ENCODE measurements at regions of chr5 and their contacts with region 1.

Region 1: DNA sequence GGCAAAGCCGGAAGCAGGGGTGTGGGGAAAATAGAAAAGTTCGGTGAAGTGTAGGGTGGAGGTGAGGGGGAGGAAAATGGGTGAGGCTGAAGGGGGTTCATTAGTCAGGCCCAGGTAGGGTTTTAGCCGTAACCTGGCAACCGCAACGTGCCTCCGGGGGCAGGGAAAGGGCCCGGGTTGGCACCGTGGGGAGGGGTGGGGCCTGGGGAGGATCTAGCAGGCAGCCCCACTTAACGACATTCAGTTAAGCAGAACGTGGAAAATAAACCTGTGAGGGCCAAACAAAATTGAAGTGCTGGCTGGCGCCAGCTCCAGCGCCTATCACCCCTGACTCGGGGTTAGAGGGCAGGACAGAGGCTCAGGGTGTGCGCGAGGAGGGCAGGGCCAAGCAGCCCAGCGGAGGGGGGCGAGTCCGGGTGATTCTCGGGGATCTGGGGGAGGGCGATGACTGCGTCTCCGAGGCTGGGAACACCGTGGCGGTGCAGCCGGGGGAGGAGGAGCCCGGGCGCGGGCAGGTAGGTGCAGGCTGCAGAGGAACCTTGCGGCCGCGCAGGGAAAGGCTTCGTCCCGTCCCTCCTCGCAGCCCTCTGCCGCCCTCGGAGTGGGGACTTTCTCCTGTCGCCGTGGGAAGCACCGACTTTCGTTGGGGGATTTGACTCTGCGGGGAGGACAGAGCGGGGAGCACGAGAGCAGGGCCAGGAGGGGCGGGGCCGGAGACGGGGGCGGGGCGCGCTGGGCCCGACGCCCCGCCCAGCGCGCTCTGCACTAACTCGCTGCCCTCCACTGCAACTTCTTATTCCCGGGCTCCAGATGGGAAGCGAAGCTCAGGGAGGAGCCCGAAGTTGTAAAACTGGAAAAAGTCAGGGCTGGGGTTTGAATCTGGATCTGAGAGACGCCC is 5.1 kb downstream of the RGS14 start:
- DNase-seq: peak; percentile 89
- H3K4me3 Mint-ChIP-seq: peak overlapping the region; percentile 75
- H3K27ac Mint-ChIP-seq: peak overlapping the region; percentile 84
- H3K4me1 Mint-ChIP-seq: peaks cover 74% of the 10 kb centered on the region
- H3K27me3 Mint-ChIP-seq: no peaks in the 10 kb centered on the region

Region 2: GRCh38 chr5:177271113-177271512 is 91.7 kb before region 1 on chr5:
- CTCF ChIA-PET with region 1: no interaction called
- intact Hi-C with region 1: no loop called
- DNase-seq: no peak
- H3K4me3 Mint-ChIP-seq: no peak overlapping the region
- H3K27ac Mint-ChIP-seq: no peak overlapping the region
- H3K4me1 Mint-ChIP-seq: no peaks in the 10 kb centered on the region
- H3K27me3 Mint-ChIP-seq: no peaks in the 10 kb centered on the region

Region 3: GRCh38 chr5:177311723-177312648 is 50.9 kb before region 1 on chr5 and contains the start of gene MXD3:
- CTCF ChIA-PET with region 1: interaction called, 5 read pairs
- intact Hi-C with region 1: loop called (anchors 2 kb)
- DNase-seq: peak; percentile 99
- H3K4me3 Mint-ChIP-seq: peak within 1 kb of the TSS; percentile 97
- H3K27ac Mint-ChIP-seq: peak within 1 kb of the TSS; percentile 82
- H3K4me1 Mint-ChIP-seq: peaks cover 20% of the 10 kb centered on the region
- H3K27me3 Mint-ChIP-seq: peaks cover 3% of the 10 kb centered on the region
- total RNA-seq, gene MXD3: 45.0 to 51.7 TPM

Region 4: DNA sequence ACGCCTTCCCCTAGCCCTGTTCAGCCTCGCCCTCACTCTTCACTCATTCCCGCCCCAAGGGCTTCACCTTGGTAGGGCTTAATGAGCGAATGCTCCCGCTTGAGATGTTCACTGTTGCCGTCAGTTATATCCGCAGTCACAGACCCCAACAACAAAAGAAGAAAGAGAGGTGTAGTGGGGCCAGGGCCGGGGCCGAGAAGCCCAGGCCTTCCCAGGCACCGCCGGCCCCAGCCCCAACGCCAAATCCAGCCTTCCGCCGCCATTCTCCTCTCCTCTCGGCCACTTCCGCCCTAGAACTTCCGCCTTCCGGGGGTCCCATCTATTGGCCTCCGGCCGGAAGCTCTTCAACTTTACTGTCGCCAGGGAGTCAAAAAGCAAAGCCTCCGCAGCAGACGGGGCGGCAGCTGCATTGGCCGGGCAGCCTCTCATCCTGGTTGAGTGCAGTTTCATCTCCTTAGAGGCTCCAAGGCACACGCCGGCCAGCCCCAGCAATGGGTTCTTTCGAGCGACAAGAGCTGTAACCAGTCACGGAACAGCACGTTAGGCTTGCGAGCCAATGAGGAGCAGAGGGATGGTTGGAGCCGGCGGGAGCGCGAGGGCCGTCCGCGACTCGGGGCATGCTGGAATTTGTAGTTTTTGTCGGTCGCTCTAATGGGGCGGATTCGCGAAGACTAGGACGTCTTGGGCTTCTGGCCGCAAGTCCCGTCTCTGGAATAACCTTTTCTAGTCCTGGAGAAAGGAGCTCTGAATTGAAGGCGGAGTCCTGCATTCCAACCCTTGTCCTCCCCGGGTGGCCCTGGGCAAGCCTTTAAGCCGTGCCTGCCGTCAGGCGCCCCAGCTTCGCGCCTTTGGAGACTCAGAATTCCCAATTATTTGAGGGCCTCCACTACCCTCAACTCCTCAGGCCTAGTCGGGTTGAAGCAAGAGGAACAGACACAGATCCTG is 11.2 kb before region 1 on chr5 and contains the start of gene LMAN2:
- CTCF ChIA-PET with region 1: interaction called, 8 read pairs
- intact Hi-C with region 1: loop called (anchors 1 kb)
- DNase-seq: peak; percentile 96
- H3K4me3 Mint-ChIP-seq: peak within 1 kb of the TSS; percentile 95
- H3K27ac Mint-ChIP-seq: peak within 1 kb of the TSS; percentile 100
- H3K4me1 Mint-ChIP-seq: peaks cover 43% of the 10 kb centered on the region
- H3K27me3 Mint-ChIP-seq: no peaks in the 10 kb centered on the region
- total RNA-seq, gene LMAN2: 82.2 to 83.9 TPM

Region 5: DNA sequence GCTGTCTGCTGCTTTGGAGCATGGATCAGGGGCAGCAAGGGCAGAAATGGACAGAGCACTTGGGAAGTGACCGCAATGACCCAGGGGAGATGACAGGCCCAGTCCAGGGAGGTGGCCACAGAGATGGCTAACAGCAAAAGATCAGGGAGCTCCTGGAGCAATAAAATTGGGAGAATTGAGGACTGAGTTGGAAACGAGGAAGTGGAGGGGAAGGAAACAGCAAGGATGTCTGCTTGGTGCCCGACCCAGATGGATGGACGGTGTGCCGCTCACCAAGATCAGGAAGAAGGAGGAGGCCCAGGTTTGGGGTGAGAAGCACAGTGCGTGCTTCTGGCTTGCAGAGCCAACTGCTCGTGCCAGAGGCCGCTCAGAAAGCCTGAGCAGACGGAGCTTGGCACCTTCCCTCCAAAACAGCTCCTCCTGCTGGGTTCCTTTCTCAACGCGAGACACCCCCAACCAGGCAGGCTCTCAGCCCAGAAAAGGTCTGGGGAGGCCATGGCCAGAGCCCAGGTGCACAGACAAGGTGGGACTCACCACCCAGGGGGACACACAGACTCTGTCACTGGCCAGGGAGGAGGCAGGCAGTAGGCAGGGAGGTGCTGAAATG is 19.7 kb after region 1 on chr5:
- CTCF ChIA-PET with region 1: interaction called, 13 read pairs
- intact Hi-C with region 1: loop called (anchors 2 kb)
- DNase-seq: peak; percentile 71
- H3K4me3 Mint-ChIP-seq: no peak overlapping the region
- H3K27ac Mint-ChIP-seq: no peak overlapping the region
- H3K4me1 Mint-ChIP-seq: peaks cover 35% of the 10 kb centered on the region
- H3K27me3 Mint-ChIP-seq: no peaks in the 10 kb centered on the region

Measured in activated naive CD4-positive, alpha-beta T cell treated with anti-CD3 and anti-CD28 coated beads for 36 hours (primary cell).